ENCODE measurements at regions of chr9 and their contacts with region 1.

Region 1: DNA sequence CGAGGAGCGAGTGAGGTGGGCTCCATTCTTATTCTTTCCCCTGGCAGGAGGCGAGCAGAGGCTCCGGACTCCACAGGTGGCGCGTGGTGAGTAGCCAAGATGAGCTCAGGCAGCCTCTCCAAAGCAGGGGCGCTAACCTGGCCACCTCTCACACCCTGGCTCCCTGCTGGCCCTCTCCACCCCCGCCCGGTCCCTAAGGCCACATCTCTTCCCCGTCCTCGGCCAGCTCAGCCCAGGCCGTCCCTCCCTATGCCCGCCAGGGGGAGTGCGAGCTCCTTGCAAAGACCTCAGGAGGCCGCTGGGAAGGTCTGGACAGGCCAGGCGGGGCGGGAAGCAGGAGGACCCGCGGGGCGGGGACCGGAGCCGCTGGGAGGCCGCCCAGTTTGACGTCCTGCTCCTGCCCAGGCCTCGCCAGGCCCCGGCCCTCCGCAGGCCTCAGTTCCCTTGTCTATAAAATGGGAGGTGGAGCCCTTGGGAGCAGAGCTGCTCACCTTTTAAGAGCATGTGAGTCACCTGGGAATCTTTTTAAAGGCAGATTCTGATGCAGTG is 46.3 kb upstream of the GGTA1 start:
- DNase-seq: peak; percentile 93
- ATAC-seq: peak; percentile 94
- H3K4me3 ChIP-seq: peak overlapping the region; percentile 29 to 44
- H3K27ac ChIP-seq: peak overlapping the region; percentile 6; the same call in 1 of the 2 replicates
- H3K4me1 ChIP-seq: peaks cover 7 to 28% of the 10 kb centered on the region in 2 experiments; a peak in 3 of 4 replicates
- H3K27me3 ChIP-seq: no peaks in the 10 kb centered on the region
- CTCF ChIP-seq: peak; percentile 94 to 96 (median 95)
- POLR2A ChIP-seq: no peak
- RAD21 ChIP-seq: peak; percentile 98

Region 2: GRCh38 chr9:121557581-121558447 is 11.9 kb after region 1 on chr9:
- CTCF ChIA-PET with region 1: interaction called, 18 read pairs
- POLR2A ChIA-PET with region 1: interaction called, 3 read pairs
- RAD21 ChIA-PET with region 1: no interaction called
- intact Hi-C with region 1: no loop called
- DNase-seq: no peak
- ATAC-seq: peak; percentile 78
- H3K4me3 ChIP-seq: peak overlapping the region in 1 of 2 experiments; percentile 39; a peak in 3 of 4 replicates
- H3K27ac ChIP-seq: peak overlapping the region; percentile 9; the same call in 1 of the 2 replicates
- H3K4me1 ChIP-seq: peaks cover 14 to 17% of the 10 kb centered on the region in 2 experiments
- H3K27me3 ChIP-seq: no peaks in the 10 kb centered on the region
- CTCF ChIP-seq: no peak
- POLR2A ChIP-seq: no peak
- RAD21 ChIP-seq: no peak

Region 3: GRCh38 chr9:121598965-121599871 is 53.3 kb after region 1 on chr9:
- CTCF ChIA-PET with region 1: interaction called, 14 read pairs
- POLR2A ChIA-PET with region 1: interaction called, 3 read pairs
- RAD21 ChIA-PET with region 1: interaction called, 3 to 4 read pairs
- intact Hi-C with region 1: loop called (anchors 5 kb)
- DNase-seq: peak; percentile 71
- ATAC-seq: peak; percentile 83
- H3K4me3 ChIP-seq: peak overlapping the region; percentile 79 to 88
- H3K27ac ChIP-seq: peak overlapping the region; percentile 95
- H3K4me1 ChIP-seq: peaks cover 22 to 53% of the 10 kb centered on the region in 2 experiments
- H3K27me3 ChIP-seq: no peaks in the 10 kb centered on the region
- CTCF ChIP-seq: no peak
- POLR2A ChIP-seq: no peak
- RAD21 ChIP-seq: no peak

Region 4: DNA sequence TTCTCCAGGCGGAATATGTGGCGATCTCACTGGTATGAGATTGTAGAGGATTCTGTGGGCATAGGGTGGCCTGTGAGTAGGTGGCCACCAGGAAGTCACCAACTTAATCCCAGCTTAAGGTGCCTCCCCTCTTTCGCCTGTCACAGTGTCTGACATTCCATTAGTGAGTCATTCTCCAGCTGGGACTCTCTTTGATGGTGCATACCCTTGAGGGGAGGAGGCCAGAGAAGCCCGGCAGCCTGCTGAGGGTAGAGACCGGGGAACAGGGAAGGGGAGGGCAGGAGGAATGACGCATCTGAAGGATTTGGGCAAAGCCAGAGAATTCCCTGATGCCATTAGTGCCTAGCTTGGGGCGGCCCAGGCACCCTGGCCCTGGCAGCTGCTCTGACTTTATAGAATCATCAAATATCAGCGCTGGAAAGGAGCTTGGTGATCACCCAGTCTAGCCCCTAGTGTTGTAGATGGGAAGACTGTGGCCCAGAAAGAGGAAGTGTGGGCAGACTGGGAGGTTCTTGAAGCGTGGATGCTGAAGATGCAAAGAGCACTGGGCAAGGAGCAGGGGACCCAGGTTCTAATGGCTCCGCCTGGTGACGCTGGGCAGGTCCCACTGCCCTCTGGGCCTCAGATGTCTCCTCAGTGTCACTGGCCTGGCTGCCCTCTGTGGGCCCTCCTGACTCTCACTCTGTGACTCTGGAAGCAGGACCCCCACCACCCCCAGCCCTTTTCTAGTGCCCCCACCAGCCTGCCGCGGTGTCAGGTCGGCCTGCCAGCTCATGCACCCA is 146.8 kb after region 1 on chr9:
- CTCF ChIA-PET with region 1: interaction called, 16 read pairs
- POLR2A ChIA-PET with region 1: no interaction called
- RAD21 ChIA-PET with region 1: interaction called, 3 read pairs
- intact Hi-C with region 1: loop called (anchors 2 kb)
- DNase-seq: peak; percentile 86
- ATAC-seq: peak; percentile 92
- H3K4me3 ChIP-seq: no peak overlapping the region
- H3K27ac ChIP-seq: no peak overlapping the region
- H3K4me1 ChIP-seq: peaks cover 15 to 35% of the 10 kb centered on the region in 2 experiments
- H3K27me3 ChIP-seq: no peaks in the 10 kb centered on the region
- CTCF ChIP-seq: no peak
- POLR2A ChIP-seq: no peak
- RAD21 ChIP-seq: no peak

Region 5: GRCh38 chr9:121839726-121840500 is 294.0 kb after region 1 on chr9:
- CTCF ChIA-PET with region 1: no interaction called
- POLR2A ChIA-PET with region 1: no interaction called
- RAD21 ChIA-PET with region 1: no interaction called
- intact Hi-C with region 1: no loop called
- DNase-seq: no peak
- ATAC-seq: no peak
- H3K4me3 ChIP-seq: no peak overlapping the region
- H3K27ac ChIP-seq: no peak overlapping the region
- H3K4me1 ChIP-seq: no peaks in the 10 kb centered on the region
- H3K27me3 ChIP-seq: no peaks in the 10 kb centered on the region
- CTCF ChIP-seq: no peak
- POLR2A ChIP-seq: no peak
- RAD21 ChIP-seq: no peak

Region 6: GRCh38 chr9:121861501-121862180 is 315.7 kb after region 1 on chr9:
- CTCF ChIA-PET with region 1: interaction called, 9 read pairs
- POLR2A ChIA-PET with region 1: no interaction called
- RAD21 ChIA-PET with region 1: no interaction called
- intact Hi-C with region 1: loop called (anchors 1 kb)
- DNase-seq: peak; percentile 31
- ATAC-seq: peak; percentile 100
- H3K4me3 ChIP-seq: no peak overlapping the region
- H3K27ac ChIP-seq: no peak overlapping the region
- H3K4me1 ChIP-seq: no peaks in the 10 kb centered on the region
- H3K27me3 ChIP-seq: peaks cover 5% of the 10 kb centered on the region; the same call in 1 of the 2 replicates
- CTCF ChIP-seq: peak; percentile 79 to 91 (median 80); a peak in 5 of 6 replicates
- POLR2A ChIP-seq: no peak
- RAD21 ChIP-seq: peak; percentile 73

Region 7: GRCh38 chr9:122092611-122093506 is 546.9 kb after region 1 on chr9 and contains the start of gene TTLL11:
- CTCF ChIA-PET with region 1: no interaction called
- POLR2A ChIA-PET with region 1: no interaction called
- RAD21 ChIA-PET with region 1: no interaction called
- intact Hi-C with region 1: loop called (anchors 10 kb)
- DNase-seq: peak; percentile 82
- ATAC-seq: peak; percentile 87
- H3K4me3 ChIP-seq: peak within 1 kb of the TSS; percentile 69 to 85
- H3K27ac ChIP-seq: peak within 1 kb of the TSS; percentile 23; the same call in 1 of the 2 replicates
- H3K4me1 ChIP-seq: peaks cover 9 to 15% of the 10 kb centered on the region in 2 experiments
- H3K27me3 ChIP-seq: no peaks in the 10 kb centered on the region
- CTCF ChIP-seq: no peak
- POLR2A ChIP-seq: peak; percentile 38
- RAD21 ChIP-seq: no peak
- total RNA-seq, gene TTLL11: 2.2 TPM